Activated naive CD4-positive, alpha-beta T cell treated with anti-CD3 and anti-CD28 coated beads for 36 hours (primary cell): ENCODE measurements at regions of chr10 and their contacts with region 1.

Region 1: GRCh38 chr10:22333167-22333974 is 11.9 kb upstream of the SPAG6 start:
- DNase-seq: no peak
- H3K4me3 Mint-ChIP-seq: peak overlapping the region; percentile 31
- H3K27ac Mint-ChIP-seq: peak overlapping the region; percentile 20
- H3K4me1 Mint-ChIP-seq: peaks cover 20% of the 10 kb centered on the region
- H3K27me3 Mint-ChIP-seq: peaks cover 48% of the 10 kb centered on the region

Region 2: GRCh38 chr10:21746118-21746517 is 587.3 kb before region 1 on chr10:
- CTCF ChIA-PET with region 1: no interaction called
- intact Hi-C with region 1: no loop called
- DNase-seq: peak; percentile 14
- H3K4me3 Mint-ChIP-seq: no peak overlapping the region
- H3K27ac Mint-ChIP-seq: peak overlapping the region; percentile 0
- H3K4me1 Mint-ChIP-seq: peaks cover 20% of the 10 kb centered on the region
- H3K27me3 Mint-ChIP-seq: no peaks in the 10 kb centered on the region

Region 3: GRCh38 chr10:22321924-22322640 is 11.3 kb before region 1 on chr10:
- CTCF ChIA-PET with region 1: interaction called, 3 read pairs
- intact Hi-C with region 1: loop called (anchors 1 kb)
- DNase-seq: peak; percentile 14
- H3K4me3 Mint-ChIP-seq: peak overlapping the region; percentile 85
- H3K27ac Mint-ChIP-seq: peak overlapping the region; percentile 82
- H3K4me1 Mint-ChIP-seq: peaks cover 40% of the 10 kb centered on the region
- H3K27me3 Mint-ChIP-seq: peaks cover 51% of the 10 kb centered on the region